ENCODE measurements at regions of chr10 and their contacts with region 1.

Region 1: DNA sequence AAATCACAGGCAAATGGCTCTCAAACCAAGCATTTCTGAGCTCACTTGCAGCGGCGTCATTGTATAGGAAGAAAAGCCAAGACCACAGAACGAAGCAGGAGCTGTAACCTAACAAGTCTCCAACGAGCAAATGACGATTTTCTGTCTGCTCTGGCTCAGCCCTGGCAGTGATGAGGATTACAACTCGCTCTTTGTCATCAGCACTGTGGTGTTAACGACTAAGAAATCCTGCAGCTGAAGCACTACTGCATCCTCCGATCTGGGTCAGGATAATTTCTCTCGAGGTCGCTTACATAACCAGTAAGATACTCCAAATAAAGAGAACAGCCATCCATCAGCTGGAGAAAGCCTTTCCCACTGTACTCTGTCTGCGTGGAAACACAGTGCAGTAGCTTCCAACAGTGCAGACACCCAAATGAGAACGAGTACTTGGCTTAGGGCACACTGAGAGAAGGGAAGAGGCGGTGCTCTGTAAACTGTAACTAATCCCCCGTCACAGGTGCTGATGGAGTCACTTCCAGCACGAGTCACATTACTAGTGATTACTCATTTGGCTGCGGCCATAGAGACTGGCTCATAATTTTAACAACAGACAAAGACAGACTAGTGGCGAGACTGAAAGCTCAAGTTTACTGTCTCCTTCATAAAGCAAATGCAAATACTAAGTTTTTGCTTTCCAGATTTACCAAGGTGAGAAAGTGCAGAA is 135.8 kb downstream of the NRBF2 start:
- DNase-seq: peak; percentile 82 to 96
- H3K4me3 ChIP-seq: peak overlapping the region; percentile 71
- H3K27ac ChIP-seq: peak overlapping the region; percentile 96
- H3K4me1 ChIP-seq: peaks cover 34% of the 10 kb centered on the region
- H3K27me3 ChIP-seq: no peaks in the 10 kb centered on the region
- CTCF ChIP-seq: peak; percentile 25; the same call in 1 of the 2 replicates

Region 2: DNA sequence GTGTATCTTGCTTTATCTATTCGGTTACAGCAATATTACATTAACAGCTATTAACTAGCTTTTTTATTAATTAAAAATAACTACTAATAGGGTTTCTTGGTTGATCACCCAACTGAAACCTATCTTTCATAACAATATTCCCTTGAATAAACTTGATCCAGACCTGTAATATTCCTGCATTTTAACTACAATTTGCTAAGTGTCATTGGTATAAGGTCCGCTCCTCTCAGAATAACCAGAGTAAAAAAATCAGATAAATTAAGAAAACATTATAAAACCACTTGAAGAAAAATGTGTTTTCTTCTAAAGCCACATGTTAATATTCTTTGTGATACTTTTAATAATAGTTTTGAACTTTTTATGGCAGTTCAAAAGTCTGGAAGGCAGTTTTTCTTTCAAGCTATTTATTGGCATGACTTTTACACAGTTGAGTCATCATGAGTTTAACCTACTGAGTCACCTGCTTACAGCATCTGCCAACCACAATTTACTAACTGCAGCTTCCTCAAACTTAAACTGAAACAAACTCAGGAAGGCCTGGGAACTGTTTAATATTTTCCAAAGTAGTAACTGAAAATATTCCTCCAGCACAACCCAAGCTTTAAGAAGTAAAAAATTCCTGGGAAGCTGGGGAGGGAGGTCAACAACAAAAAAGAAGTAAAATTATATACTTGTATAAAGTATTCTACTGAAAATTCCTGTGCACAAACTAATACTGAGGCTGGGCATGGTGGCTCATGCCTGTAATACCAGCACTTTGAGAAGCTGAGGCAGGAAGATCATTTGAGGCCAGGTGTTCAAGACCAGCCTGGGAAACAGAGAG is 32.6 kb before region 1 on chr10:
- CTCF ChIA-PET with region 1: interaction called, 4 read pairs
- POLR2A ChIA-PET with region 1: interaction called, 19 read pairs
- intact Hi-C with region 1: loop called (anchors 2 kb)
- DNase-seq: peak; percentile 22 to 91
- H3K4me3 ChIP-seq: no peak overlapping the region
- H3K27ac ChIP-seq: peak overlapping the region; percentile 93
- H3K4me1 ChIP-seq: peaks cover 40% of the 10 kb centered on the region
- H3K27me3 ChIP-seq: no peaks in the 10 kb centered on the region
- CTCF ChIP-seq: no peak

Region 3: GRCh38 chr10:63375859-63376258 is 106.9 kb after region 1 on chr10:
- CTCF ChIA-PET with region 1: no interaction called
- POLR2A ChIA-PET with region 1: interaction called, 26 read pairs
- intact Hi-C with region 1: no loop called
- DNase-seq: no peak
- H3K4me3 ChIP-seq: no peak overlapping the region
- H3K27ac ChIP-seq: no peak overlapping the region
- H3K4me1 ChIP-seq: no peaks in the 10 kb centered on the region
- H3K27me3 ChIP-seq: no peaks in the 10 kb centered on the region
- CTCF ChIP-seq: no peak

Region 4: GRCh38 chr10:63437116-63437949 is 168.4 kb after region 1 on chr10:
- CTCF ChIA-PET with region 1: no interaction called
- POLR2A ChIA-PET with region 1: interaction called, 4 read pairs
- intact Hi-C with region 1: loop called (anchors 2 kb)
- DNase-seq: no peak
- H3K4me3 ChIP-seq: no peak overlapping the region
- H3K27ac ChIP-seq: no peak overlapping the region
- H3K4me1 ChIP-seq: peaks cover 23% of the 10 kb centered on the region
- H3K27me3 ChIP-seq: no peaks in the 10 kb centered on the region
- CTCF ChIP-seq: no peak

Region 5: DNA sequence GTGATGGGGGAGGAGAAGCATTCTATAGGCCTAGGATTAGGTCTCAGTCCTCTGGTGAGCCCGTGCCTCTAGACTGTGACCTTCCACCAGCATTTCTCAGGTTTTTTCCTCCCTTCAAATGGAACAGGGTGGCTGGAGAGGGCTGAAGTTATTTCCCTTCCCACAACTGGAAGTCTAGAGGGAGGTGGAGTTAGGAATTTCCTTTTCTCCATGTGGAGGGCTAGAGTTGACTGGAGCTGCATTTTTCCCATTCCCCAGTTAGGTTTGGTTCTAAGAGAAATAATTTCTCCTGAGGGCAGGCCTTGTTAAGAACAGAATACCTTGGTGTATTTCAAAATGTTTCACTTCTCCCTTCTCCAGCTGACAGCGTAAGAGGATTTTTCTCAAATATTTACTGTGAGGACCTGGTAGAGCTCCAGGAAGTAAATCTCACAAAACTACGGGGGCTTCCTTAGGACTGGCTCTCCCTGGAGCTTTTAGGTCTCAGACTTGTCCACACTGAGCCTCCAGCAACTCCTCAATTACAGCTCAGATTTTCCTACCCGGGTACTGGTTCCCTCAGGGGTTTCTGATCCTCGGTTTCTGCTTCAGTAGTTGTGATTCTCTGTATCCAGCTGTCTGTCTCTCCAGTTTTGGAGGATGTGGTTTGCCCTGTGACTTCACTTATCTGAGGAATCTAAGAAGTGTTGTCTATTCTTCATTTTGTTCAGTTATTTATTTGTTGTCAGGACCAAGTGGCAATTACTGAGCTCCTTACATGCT is 246.2 kb after region 1 on chr10:
- CTCF ChIA-PET with region 1: no interaction called
- POLR2A ChIA-PET with region 1: no interaction called
- intact Hi-C with region 1: loop called (anchors 1 kb)
- DNase-seq: peak; percentile 47 to 48
- H3K4me3 ChIP-seq: no peak overlapping the region
- H3K27ac ChIP-seq: peak overlapping the region; percentile 46
- H3K4me1 ChIP-seq: peaks cover 38% of the 10 kb centered on the region
- H3K27me3 ChIP-seq: no peaks in the 10 kb centered on the region
- CTCF ChIP-seq: no peak

Region 6: DNA sequence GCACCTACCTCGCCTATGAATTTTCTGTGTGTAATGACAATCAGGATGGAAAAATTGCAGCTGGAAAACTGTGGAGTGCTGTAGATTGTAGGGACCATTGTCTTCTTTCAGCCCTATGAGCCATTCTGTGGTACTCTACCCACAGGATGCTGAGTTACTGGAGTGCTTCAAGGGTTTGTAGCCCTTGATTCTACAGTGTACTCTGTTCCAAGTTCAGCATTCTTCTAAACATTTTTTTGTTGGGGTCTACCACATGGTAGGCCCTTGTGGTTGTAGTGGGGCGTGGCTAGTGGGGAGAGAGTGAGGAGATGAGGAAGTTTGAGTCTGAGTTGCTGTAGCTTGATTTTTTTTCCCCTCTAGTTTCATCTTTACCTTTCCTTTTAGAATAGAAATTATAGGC is 285.7 kb after region 1 on chr10:
- CTCF ChIA-PET with region 1: no interaction called
- POLR2A ChIA-PET with region 1: no interaction called
- intact Hi-C with region 1: loop called (anchors 2 kb)
- DNase-seq: peak; percentile 60
- H3K4me3 ChIP-seq: peak overlapping the region; percentile 1; the same call in 1 of the 2 replicates
- H3K27ac ChIP-seq: peak overlapping the region; percentile 99
- H3K4me1 ChIP-seq: peaks cover 36% of the 10 kb centered on the region
- H3K27me3 ChIP-seq: no peaks in the 10 kb centered on the region
- CTCF ChIP-seq: no peak